Mucosa of descending colon (tissue), 3 donors: ENCODE measurements at regions of chr14 and their contacts with region 1.

Region 1: DNA sequence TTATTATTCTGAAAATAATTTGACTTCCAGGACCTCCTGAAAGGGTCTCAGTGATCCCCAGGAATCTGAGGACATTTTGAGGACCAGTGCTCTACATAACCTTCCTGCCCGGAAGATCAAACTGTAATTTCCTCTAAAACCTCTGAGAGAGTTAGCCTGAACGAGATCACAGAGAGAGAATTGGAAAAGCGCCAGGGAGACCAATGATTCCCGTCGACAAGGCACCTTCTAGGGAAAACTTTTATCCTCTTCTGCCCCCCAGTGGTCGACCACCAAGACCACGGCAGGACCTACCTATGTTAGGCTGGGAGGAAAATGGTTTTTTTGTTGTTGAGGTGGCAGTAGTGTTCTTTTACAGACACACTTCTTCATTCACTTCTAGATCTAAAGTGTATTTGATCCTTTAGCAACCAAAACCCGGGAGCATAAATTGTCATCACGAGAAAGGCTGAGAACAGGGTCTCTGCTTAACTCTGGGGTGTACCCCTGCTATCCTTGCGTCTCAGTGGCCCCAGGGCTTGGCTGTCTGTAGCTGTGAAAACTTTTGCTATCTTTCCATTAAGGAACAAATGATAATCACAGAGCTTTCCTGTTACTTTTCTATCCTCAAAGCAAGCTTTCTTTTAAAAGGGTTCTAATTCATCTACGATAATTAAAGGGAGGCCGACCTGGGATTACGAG is 62.9 kb upstream of the NID2 start:
- DNase-seq: peak in 2 of 3 donors; percentile 67 to 91
- ATAC-seq: peak; percentile 97
- H3K4me3 ChIP-seq: no peak overlapping the region
- H3K4me1 ChIP-seq: peaks cover 6% of the 10 kb centered on the region
- CTCF ChIP-seq: peak; percentile 18

Region 2: GRCh38 chr14:51228890-51229289 is 902.9 kb before region 1 on chr14:
- intact Hi-C with region 1: no loop called
- DNase-seq: no peak
- ATAC-seq: no peak
- H3K4me3 ChIP-seq: no peak overlapping the region
- H3K4me1 ChIP-seq: no peaks in the 10 kb centered on the region
- CTCF ChIP-seq: no peak

Region 3: DNA sequence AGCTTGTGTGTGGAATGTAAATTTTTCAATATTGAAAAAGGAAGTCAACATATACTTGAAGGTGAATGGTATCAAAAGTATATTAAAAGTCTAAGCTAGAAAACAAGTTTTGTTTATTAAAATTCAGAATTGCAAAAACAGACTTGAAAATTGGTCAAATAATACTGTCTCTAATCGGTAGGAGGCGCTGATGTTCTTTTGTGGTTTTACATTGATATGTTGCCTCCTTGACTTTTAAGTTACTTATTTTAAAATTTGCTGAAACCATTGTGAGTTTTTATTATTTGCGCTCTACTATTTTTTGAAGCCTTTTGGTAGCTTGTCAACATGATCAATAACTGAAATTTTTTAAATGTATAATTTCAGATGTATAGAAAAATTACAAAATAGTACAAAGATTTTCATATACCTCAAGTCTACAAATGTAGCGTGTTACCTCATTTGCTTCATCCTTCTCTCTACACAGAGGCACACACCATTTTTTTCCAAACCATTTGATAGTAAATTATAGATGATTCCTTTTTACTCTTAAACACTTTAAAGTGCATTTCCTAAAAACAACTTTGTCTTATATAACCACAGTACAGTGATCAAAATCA is 135.5 kb before region 1 on chr14:
- intact Hi-C with region 1: loop called (anchors 5 kb)
- DNase-seq: peak in 1 of 3 donors; percentile 64
- ATAC-seq: peak; percentile 34
- H3K4me3 ChIP-seq: no peak overlapping the region
- H3K4me1 ChIP-seq: no peaks in the 10 kb centered on the region
- CTCF ChIP-seq: peak; percentile 21